ENCODE measurements at regions of chr20 and their contacts with region 1.

Region 1: GRCh38 chr20:50987592-50988210 is 29.1 kb downstream of the MOCS3 start:
- DNase-seq: peak; percentile 71
- H3K4me3 Mint-ChIP-seq: no peak overlapping the region
- H3K27ac Mint-ChIP-seq: no peak overlapping the region
- H3K4me1 Mint-ChIP-seq: no peaks in the 10 kb centered on the region
- H3K27me3 Mint-ChIP-seq: peaks cover 50% of the 10 kb centered on the region

Region 2: GRCh38 chr20:51318058-51318895 is 330.6 kb after region 1 on chr20:
- CTCF ChIA-PET with region 1: interaction called, 45 read pairs
- DNase-seq: peak; percentile 54
- H3K4me3 Mint-ChIP-seq: no peak overlapping the region
- H3K27ac Mint-ChIP-seq: no peak overlapping the region
- H3K4me1 Mint-ChIP-seq: no peaks in the 10 kb centered on the region
- H3K27me3 Mint-ChIP-seq: peaks cover 9% of the 10 kb centered on the region

Measured in activated naive CD4-positive, alpha-beta T cell treated with anti-CD3 and anti-CD28 coated beads, Interleukin-2, amount 10 ng/mL, durations not matched to agents 7 days and 5 days (primary cell).